ENCODE measurements at regions of chr4 and their contacts with region 1.

Region 1: GRCh38 chr4:121705521-121705920 is 8.7 kb upstream of the ANXA5 start:
- DNase-seq: no peak
- H3K4me3 ChIP-seq: no peak overlapping the region
- H3K27ac ChIP-seq: no peak overlapping the region
- H3K4me1 ChIP-seq: no peaks in the 10 kb centered on the region; a peak in 1 of 7 replicates
- H3K27me3 ChIP-seq: no peaks in the 10 kb centered on the region
- CTCF ChIP-seq: no peak
- EP300 ChIP-seq: no peak
- POLR2A ChIP-seq: no peak
- RAD21 ChIP-seq: no peak

Region 2: GRCh38 chr4:121252224-121252806 is 453.2 kb before region 1 on chr4:
- CTCF ChIA-PET with region 1: no interaction called
- POLR2A ChIA-PET with region 1: no interaction called
- DNase-seq: peak; percentile 25 to 63
- H3K4me3 ChIP-seq: no peak overlapping the region
- H3K27ac ChIP-seq: no peak overlapping the region
- H3K4me1 ChIP-seq: no peaks in the 10 kb centered on the region; a peak in 1 of 7 replicates
- H3K27me3 ChIP-seq: peaks cover 0 to 1% (median 0%) of the 10 kb centered on the region in 4 experiments; a peak in 1 of 7 replicates
- CTCF ChIP-seq: peak; percentile 52 to 88 (median 79)
- EP300 ChIP-seq: no peak
- POLR2A ChIP-seq: no peak
- RAD21 ChIP-seq: peak; percentile 64 to 79

Region 3: GRCh38 chr4:121736735-121737351 is 31.3 kb after region 1 on chr4:
- CTCF ChIA-PET with region 1: interaction called, 12 read pairs
- POLR2A ChIA-PET with region 1: no interaction called
- DNase-seq: peak in 1 of 2 experiments; percentile 51
- H3K4me3 ChIP-seq: no peak overlapping the region
- H3K27ac ChIP-seq: no peak overlapping the region
- H3K4me1 ChIP-seq: peaks cover 0 to 3% (median 2%) of the 10 kb centered on the region in 4 experiments; a peak in 4 of 7 replicates
- H3K27me3 ChIP-seq: no peaks in the 10 kb centered on the region; a peak in 1 of 7 replicates
- CTCF ChIP-seq: peak in 2 of 3 experiments; percentile 41 to 58; a peak in 3 of 4 replicates
- EP300 ChIP-seq: no peak
- POLR2A ChIP-seq: no peak
- RAD21 ChIP-seq: peak; percentile 73 to 79

Region 4: GRCh38 chr4:121998002-121998401 is 292.5 kb after region 1 on chr4:
- CTCF ChIA-PET with region 1: no interaction called
- POLR2A ChIA-PET with region 1: no interaction called
- DNase-seq: no peak
- H3K4me3 ChIP-seq: no peak overlapping the region
- H3K27ac ChIP-seq: no peak overlapping the region
- H3K4me1 ChIP-seq: no peaks in the 10 kb centered on the region
- H3K27me3 ChIP-seq: no peaks in the 10 kb centered on the region
- CTCF ChIP-seq: peak; percentile 15 to 64 (median 42); a peak in 3 of 4 replicates
- EP300 ChIP-seq: no peak
- POLR2A ChIP-seq: no peak
- RAD21 ChIP-seq: peak; percentile 73 to 78

Measured in H1 (cell line).